ENCODE measurements at regions of chr17 and their contacts with region 1.

Region 1: GRCh38 chr17:50707289-50708049 is at the start of gene ANKRD40:
- DNase-seq: peak; percentile 95 to 99
- H3K4me3 ChIP-seq: peak within 1 kb of the TSS; percentile 68
- H3K4me3 Mint-ChIP-seq: peak within 1 kb of the TSS; percentile 97
- H3K27ac Mint-ChIP-seq: peak within 1 kb of the TSS; percentile 79
- H3K4me1 ChIP-seq: peaks cover 15% of the 10 kb centered on the region
- H3K4me1 Mint-ChIP-seq: peaks cover 31% of the 10 kb centered on the region
- H3K27me3 ChIP-seq: no peaks in the 10 kb centered on the region
- H3K27me3 Mint-ChIP-seq: no peaks in the 10 kb centered on the region
- CTCF ChIP-seq: no peak
- total RNA-seq, gene ANKRD40: 113 and 114 TPM in 2 replicates

Region 2: GRCh38 chr17:50244771-50245170 is 462.7 kb before region 1 on chr17:
- CTCF ChIA-PET with region 1: no interaction called
- POLR2A ChIA-PET with region 1: no interaction called
- intact Hi-C with region 1: no loop called
- DNase-seq: no peak
- H3K4me3 ChIP-seq: no peak overlapping the region
- H3K4me3 Mint-ChIP-seq: no peak overlapping the region
- H3K27ac Mint-ChIP-seq: no peak overlapping the region
- H3K4me1 ChIP-seq: no peaks in the 10 kb centered on the region
- H3K4me1 Mint-ChIP-seq: no peaks in the 10 kb centered on the region
- H3K27me3 ChIP-seq: no peaks in the 10 kb centered on the region
- H3K27me3 Mint-ChIP-seq: no peaks in the 10 kb centered on the region
- CTCF ChIP-seq: no peak

Region 3: DNA sequence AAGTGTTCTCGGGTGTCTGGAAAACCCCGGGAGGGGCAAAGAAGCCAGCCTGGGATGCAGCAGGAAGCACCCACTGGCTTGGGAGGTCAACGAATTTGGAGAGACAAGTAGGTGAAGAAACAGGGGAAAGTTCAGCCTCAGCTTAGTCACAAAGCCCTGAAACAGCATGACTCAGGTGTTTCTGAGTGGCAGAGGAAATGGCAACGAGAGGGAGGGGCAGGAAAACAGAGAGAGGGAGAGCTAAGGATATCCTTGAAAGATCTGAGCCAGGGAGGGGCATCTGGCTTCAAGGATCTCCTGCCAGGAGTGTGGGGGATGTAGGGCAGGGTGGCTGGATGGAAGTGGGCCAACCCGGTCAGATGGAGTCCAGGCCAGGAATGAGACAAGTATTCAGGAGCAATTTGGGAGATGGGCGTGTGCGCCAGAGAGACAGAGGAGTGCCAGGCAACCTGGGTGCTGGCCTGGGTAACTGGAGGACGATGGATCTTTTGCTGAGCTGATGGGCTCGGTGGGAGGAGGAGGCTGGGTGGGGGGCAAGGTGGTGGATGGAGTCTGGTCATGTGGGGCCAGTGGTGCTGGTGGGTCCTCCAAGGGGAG is 45.6 kb before region 1 on chr17:
- CTCF ChIA-PET with region 1: no interaction called
- POLR2A ChIA-PET with region 1: no interaction called
- intact Hi-C with region 1: no loop called
- DNase-seq: peak; percentile 86 to 92
- H3K4me3 ChIP-seq: no peak overlapping the region
- H3K4me3 Mint-ChIP-seq: peak overlapping the region; percentile 16
- H3K27ac Mint-ChIP-seq: peak overlapping the region; percentile 92
- H3K4me1 ChIP-seq: peaks cover 31% of the 10 kb centered on the region
- H3K4me1 Mint-ChIP-seq: peaks cover 47% of the 10 kb centered on the region
- H3K27me3 ChIP-seq: no peaks in the 10 kb centered on the region
- H3K27me3 Mint-ChIP-seq: no peaks in the 10 kb centered on the region
- CTCF ChIP-seq: no peak

Region 4: GRCh38 chr17:50686494-50687199 is 20.8 kb before region 1 on chr17:
- CTCF ChIA-PET with region 1: interaction called, 6 read pairs
- POLR2A ChIA-PET with region 1: interaction called, 3 read pairs
- intact Hi-C with region 1: loop called (anchors 2 kb)
- DNase-seq: peak; percentile 94 to 98
- H3K4me3 ChIP-seq: peak overlapping the region; percentile 38
- H3K4me3 Mint-ChIP-seq: peak overlapping the region; percentile 77
- H3K27ac Mint-ChIP-seq: peak overlapping the region; percentile 96
- H3K4me1 ChIP-seq: peaks cover 91% of the 10 kb centered on the region
- H3K4me1 Mint-ChIP-seq: peaks cover 70% of the 10 kb centered on the region
- H3K27me3 ChIP-seq: no peaks in the 10 kb centered on the region
- H3K27me3 Mint-ChIP-seq: no peaks in the 10 kb centered on the region
- CTCF ChIP-seq: no peak

Region 5: GRCh38 chr17:50771991-50772785 is 64.7 kb after region 1 on chr17:
- CTCF ChIA-PET with region 1: no interaction called
- POLR2A ChIA-PET with region 1: no interaction called
- intact Hi-C with region 1: no loop called
- DNase-seq: peak in 1 of 2 experiments; percentile 34
- H3K4me3 ChIP-seq: no peak overlapping the region
- H3K4me3 Mint-ChIP-seq: no peak overlapping the region
- H3K27ac Mint-ChIP-seq: no peak overlapping the region
- H3K4me1 ChIP-seq: peaks cover 20% of the 10 kb centered on the region
- H3K4me1 Mint-ChIP-seq: peaks cover 27% of the 10 kb centered on the region
- H3K27me3 ChIP-seq: no peaks in the 10 kb centered on the region
- H3K27me3 Mint-ChIP-seq: no peaks in the 10 kb centered on the region
- CTCF ChIP-seq: no peak